ENCODE measurements at regions of chr4 and their contacts with region 1.

Region 1: GRCh38 chr4:72974694-72975487 is 94.6 kb downstream of the COX18 start:
- DNase-seq: peak; percentile 78
- H3K4me3 ChIP-seq: peak overlapping the region in 1 of 3 experiments; percentile 30
- H3K27ac ChIP-seq: peak overlapping the region; percentile 91
- H3K4me1 ChIP-seq: peaks cover 43% of the 10 kb centered on the region
- H3K27me3 ChIP-seq: no peaks in the 10 kb centered on the region
- CTCF ChIP-seq: no peak
- POLR2A ChIP-seq: peak; percentile 33

Region 2: DNA sequence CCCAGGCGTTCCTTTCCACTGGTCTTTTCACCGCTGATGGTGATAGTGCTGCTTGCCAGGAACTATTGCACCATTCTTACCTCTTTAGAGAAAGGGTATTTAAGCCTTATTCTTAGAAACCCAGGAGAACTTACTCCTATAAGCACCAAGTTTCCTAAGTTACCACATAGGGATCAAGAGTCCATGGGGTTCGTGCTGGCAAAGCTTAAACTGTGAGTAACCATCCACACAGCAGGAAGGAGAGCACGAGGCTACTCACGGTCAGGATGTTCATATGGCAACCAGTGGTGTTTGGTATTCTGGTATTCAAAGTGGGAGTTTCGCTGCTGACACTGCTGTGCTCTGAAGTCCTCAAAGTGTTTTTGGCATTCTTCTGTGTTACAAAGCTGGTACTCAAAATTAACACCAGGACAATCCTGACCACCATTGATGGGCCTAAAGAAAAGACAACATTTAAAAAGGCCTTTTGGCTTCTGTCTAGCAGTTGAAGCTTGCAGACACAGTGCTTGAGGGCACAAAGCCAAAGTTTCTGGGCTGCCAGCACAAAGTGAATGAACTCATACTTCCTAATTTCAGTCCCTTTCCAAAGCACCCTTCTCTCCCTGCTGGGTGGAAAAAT is 662.8 kb before region 1 on chr4:
- CTCF ChIA-PET with region 1: no interaction called
- POLR2A ChIA-PET with region 1: no interaction called
- dilution Hi-C with region 1: no loop called
- intact Hi-C with region 1: loop called (anchors 5 kb)
- DNase-seq: peak; percentile 77
- H3K4me3 ChIP-seq: no peak overlapping the region
- H3K27ac ChIP-seq: no peak overlapping the region
- H3K4me1 ChIP-seq: peaks cover 13% of the 10 kb centered on the region
- H3K27me3 ChIP-seq: no peaks in the 10 kb centered on the region
- CTCF ChIP-seq: no peak
- POLR2A ChIP-seq: no peak

Region 3: DNA sequence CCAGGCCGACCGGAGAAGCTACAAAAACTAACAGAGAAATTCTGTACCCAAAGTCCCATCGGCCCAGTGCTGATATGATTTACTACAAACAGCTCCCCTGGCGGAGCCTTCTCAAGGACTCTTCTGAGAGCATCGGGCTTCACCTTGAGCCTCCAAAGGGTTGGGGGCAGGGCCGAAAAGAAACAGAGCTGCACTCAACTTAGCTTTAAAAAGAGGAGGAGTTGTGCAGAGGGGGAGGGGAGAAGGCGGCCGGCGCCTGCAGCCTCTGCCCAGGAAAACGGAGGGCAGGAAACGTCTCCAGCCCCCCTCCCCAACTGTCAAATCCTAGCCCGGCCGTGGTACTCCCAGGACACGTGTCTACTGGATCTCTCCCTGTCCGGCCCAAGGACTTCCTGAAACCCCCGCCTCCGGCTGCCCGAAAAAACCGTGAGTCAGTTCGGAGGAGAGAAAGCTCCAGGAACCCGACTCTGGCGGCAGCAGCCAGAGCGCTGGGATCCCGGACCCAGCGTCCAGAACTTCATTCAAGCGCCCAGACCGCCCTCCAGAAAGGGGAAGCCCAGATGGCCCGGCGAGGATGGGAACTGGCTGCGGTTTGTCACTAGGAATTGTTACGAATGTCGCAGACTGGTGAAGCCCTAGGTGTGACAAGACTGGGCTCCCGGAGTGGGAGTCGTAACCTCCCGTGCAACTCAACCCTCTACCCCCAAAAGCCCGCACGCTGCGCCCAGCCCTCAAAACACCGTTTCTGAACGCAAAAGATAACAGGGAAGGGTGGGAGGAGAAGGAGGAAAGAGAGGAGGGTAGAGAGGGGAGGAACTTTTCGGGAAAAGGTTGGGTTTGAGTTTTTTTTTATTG is 406.8 kb before region 1 on chr4:
- CTCF ChIA-PET with region 1: no interaction called
- POLR2A ChIA-PET with region 1: no interaction called
- dilution Hi-C with region 1: no loop called
- intact Hi-C with region 1: loop called (anchors 10 kb)
- DNase-seq: peak; percentile 54
- H3K4me3 ChIP-seq: peak overlapping the region; percentile 74 to 91 (median 86)
- H3K27ac ChIP-seq: peak overlapping the region; percentile 16
- H3K4me1 ChIP-seq: peaks cover 24% of the 10 kb centered on the region
- H3K27me3 ChIP-seq: no peaks in the 10 kb centered on the region
- CTCF ChIP-seq: peak; percentile 19 to 23
- POLR2A ChIP-seq: no peak

Region 4: DNA sequence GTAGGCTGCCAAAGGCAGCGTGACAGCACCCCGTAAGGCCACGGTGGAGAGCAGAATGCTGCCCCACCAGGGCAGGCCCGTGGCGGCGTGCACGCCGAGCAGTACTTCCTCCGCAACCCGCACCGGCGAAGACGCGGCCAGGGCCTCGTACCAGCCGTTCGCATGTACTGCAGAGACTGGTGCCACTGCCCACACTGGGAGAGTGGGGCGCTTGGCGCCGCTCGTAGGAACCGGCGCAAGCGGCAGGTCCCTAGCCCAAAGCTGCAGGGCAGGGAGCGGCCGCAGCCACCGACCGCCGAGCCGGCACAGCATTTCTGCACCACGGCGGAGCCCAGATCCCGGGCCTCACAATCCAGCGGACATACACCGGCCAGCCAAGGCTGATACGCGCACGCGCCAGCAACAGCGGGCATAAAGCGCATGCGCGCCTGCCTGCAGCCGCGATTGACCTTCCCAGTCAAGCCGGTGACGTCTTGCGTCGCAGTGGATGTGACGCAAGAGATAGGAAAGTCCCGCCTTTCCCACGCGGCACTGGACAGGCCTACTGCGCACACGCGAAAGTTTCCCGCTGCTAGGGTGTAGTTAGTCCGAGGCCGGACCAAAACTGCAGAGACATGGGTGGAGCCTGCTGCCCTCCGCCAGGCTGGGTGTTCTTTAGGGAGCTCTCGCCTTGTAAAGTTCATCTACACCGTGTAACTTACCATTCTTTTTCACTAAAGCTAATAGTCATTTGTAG is 94.6 kb after region 1 on chr4 and contains the start of gene COX18:
- CTCF ChIA-PET with region 1: no interaction called
- POLR2A ChIA-PET with region 1: no interaction called
- dilution Hi-C with region 1: no loop called
- intact Hi-C with region 1: loop called (anchors 2 kb)
- DNase-seq: peak; percentile 99
- H3K4me3 ChIP-seq: peak within 1 kb of the TSS; percentile 34 to 87 (median 67)
- H3K27ac ChIP-seq: peak within 1 kb of the TSS; percentile 90
- H3K4me1 ChIP-seq: peaks cover 15% of the 10 kb centered on the region
- H3K27me3 ChIP-seq: no peaks in the 10 kb centered on the region
- CTCF ChIP-seq: no peak
- POLR2A ChIP-seq: peak; percentile 92
- total RNA-seq, gene COX18: 10.6 and 13.0 TPM in 2 replicates

Region 5: GRCh38 chr4:73086095-73086868 is 111.4 kb after region 1 on chr4:
- CTCF ChIA-PET with region 1: no interaction called
- POLR2A ChIA-PET with region 1: no interaction called
- dilution Hi-C with region 1: no loop called
- intact Hi-C with region 1: no loop called
- DNase-seq: no peak
- H3K4me3 ChIP-seq: no peak overlapping the region
- H3K27ac ChIP-seq: no peak overlapping the region
- H3K4me1 ChIP-seq: no peaks in the 10 kb centered on the region
- H3K27me3 ChIP-seq: no peaks in the 10 kb centered on the region
- CTCF ChIP-seq: no peak
- POLR2A ChIP-seq: no peak

Region 6: DNA sequence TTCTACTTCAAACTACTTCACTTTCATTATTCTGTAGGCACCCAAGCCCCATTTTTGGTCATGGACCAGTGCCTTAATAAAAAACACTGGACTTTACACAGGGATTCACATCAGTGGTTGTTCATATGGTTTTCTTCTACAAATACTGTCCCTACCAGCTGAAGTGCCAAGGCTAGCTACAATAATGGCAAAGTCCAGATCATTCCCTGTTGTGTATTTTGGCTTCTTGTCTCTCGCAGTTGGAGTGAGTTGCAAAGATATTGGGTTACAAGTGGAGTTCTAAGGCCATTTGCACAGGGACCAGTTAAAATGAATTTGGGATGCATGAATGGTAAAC is 300.4 kb after region 1 on chr4:
- CTCF ChIA-PET with region 1: no interaction called
- POLR2A ChIA-PET with region 1: no interaction called
- dilution Hi-C with region 1: no loop called
- intact Hi-C with region 1: no loop called
- DNase-seq: no peak
- H3K4me3 ChIP-seq: no peak overlapping the region
- H3K27ac ChIP-seq: no peak overlapping the region
- H3K4me1 ChIP-seq: no peaks in the 10 kb centered on the region
- H3K27me3 ChIP-seq: no peaks in the 10 kb centered on the region
- CTCF ChIP-seq: no peak
- POLR2A ChIP-seq: no peak

Measured in endothelial cell of umbilical vein (primary cell).